ENCODE measurements at regions of chr14 and their contacts with region 1.

Region 1: DNA sequence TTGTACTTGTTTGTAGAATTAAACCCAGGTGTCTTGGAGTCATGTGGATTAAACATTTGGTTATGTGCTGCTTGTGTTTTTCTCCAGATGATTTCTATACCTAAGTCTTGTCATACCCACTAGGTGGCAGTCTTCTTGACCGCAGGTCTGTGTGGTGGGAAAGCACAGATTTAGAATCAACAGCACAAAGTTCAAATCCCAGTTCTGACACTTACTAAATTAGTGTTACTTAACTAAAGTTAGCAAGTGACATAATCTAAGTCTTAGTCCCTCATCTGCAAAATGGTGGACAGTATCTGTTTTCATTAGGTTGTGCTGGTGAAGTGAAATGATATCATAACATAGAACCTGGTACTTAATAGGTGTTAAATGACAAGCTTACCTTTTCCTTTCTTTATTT is 151.0 kb upstream of the ARHGAP5 start:
- DNase-seq: peak; percentile 60
- H3K4me3 ChIP-seq: no peak overlapping the region
- H3K27ac ChIP-seq: peak overlapping the region; percentile 95
- H3K4me1 ChIP-seq: peaks cover 21% of the 10 kb centered on the region
- H3K27me3 ChIP-seq: no peaks in the 10 kb centered on the region
- CTCF ChIP-seq: peak; percentile 46 to 53
- POLR2A ChIP-seq: no peak

Region 2: DNA sequence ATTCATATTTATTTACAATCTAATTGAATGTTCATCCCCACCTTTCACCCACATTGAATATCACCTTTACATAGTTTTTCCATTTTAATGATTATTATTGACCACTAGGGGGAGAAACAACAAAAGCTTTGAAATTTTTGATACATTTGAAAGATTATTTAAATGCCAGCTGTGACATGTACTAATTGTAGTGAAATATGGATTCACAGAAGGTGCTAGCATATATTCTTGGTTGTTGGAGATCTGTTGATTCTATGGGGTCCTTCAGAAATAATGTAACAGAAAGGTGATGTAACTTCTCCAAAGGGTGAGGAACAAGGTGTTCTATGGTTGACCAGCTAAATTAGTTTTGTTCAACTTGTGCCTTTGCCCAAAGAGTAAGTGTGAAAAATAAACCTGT is 415.9 kb before region 1 on chr14:
- CTCF ChIA-PET with region 1: interaction called, 9 read pairs
- POLR2A ChIA-PET with region 1: no interaction called
- dilution Hi-C with region 1: no loop called
- intact Hi-C with region 1: loop called (anchors 10 kb)
- DNase-seq: peak; percentile 38
- H3K4me3 ChIP-seq: no peak overlapping the region
- H3K27ac ChIP-seq: no peak overlapping the region
- H3K4me1 ChIP-seq: no peaks in the 10 kb centered on the region
- H3K27me3 ChIP-seq: peaks cover 1 to 2% of the 10 kb centered on the region in 2 experiments
- CTCF ChIP-seq: peak; percentile 13 to 22
- POLR2A ChIP-seq: no peak

Region 3: DNA sequence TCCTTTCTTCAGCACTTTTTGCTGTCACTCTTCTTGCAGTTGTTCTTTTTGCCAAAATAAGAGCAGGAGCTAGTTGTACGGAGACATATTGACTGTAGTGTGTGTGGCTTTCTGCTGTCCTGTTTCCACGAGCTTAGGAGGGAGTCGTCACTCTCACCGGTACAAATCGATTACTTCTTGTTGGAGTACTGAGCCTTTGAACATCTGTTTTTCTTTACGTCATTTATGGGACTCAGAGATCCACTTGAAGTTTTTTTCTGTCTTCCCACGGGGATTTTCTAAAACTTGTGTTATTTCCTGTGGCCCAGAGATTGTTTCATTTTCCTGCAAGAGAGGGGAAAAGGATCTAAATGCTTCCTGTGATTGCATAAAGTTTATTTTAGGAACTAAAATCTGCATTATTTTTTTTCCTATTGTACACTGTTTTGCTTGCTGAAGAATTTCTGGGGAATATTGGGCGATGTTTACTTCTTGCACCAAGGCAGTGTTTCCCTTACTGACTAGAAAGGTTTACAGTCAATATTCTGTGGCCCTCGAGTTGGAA is 48.8 kb before region 1 on chr14:
- CTCF ChIA-PET with region 1: interaction called, 6 read pairs
- POLR2A ChIA-PET with region 1: no interaction called
- dilution Hi-C with region 1: no loop called
- intact Hi-C with region 1: loop called (anchors 1 kb)
- DNase-seq: peak; percentile 81
- H3K4me3 ChIP-seq: peak overlapping the region in 1 of 3 experiments; percentile 29
- H3K27ac ChIP-seq: peak overlapping the region; percentile 16
- H3K4me1 ChIP-seq: peaks cover 11% of the 10 kb centered on the region
- H3K27me3 ChIP-seq: no peaks in the 10 kb centered on the region
- CTCF ChIP-seq: no peak
- POLR2A ChIP-seq: no peak

Region 4: GRCh38 chr14:32202998-32203882 is 277.1 kb after region 1 on chr14 and contains the start of gene RNU6-8:
- CTCF ChIA-PET with region 1: interaction called, 7 read pairs
- POLR2A ChIA-PET with region 1: no interaction called
- dilution Hi-C with region 1: no loop called
- intact Hi-C with region 1: loop called (anchors 2 kb)
- DNase-seq: peak; percentile 88
- H3K4me3 ChIP-seq: peak within 1 kb of the TSS; percentile 55 to 92 (median 78)
- H3K27ac ChIP-seq: peak within 1 kb of the TSS; percentile 88
- H3K4me1 ChIP-seq: peaks cover 16% of the 10 kb centered on the region
- H3K27me3 ChIP-seq: peaks cover 6 to 17% of the 10 kb centered on the region in 2 experiments
- CTCF ChIP-seq: no peak
- POLR2A ChIP-seq: peak; percentile 46
- total RNA-seq, gene RNU6-8: not detected in 2 replicates

Region 5: DNA sequence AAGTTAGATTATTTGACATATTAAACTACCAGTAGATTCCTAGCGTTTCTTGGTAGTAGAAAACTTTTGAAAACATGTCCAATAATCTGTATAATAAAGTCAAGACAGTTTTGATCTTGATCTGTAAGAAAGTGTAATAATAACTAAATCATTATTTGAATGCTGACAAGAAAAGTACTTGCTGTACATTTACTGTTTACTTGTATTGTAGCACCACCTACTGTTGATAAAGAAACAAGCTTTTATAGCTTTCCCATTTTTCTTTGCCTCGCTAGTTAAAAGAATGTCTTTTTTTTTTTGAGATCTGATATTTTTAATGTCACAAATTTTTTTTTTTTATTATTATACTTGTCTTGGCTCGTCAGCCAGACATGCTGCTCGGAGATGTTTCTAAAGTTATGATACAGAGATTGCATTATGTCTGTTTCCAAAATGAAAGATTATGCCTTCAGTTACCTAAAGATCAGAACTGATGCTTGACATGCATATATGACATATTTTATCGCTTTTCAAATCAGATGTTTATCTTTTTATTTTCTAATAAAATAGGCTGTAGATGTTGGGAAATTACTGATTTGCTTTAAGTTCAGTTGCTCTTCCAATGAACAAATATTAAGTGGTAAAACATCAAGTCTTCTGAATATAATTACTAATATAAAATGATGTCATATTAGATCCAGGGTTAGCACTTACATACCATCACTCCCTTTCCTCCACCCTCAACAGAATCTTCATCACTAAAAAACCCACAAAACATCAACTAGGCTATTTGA is 543.5 kb after region 1 on chr14:
- CTCF ChIA-PET with region 1: interaction called, 11 read pairs
- POLR2A ChIA-PET with region 1: no interaction called
- dilution Hi-C with region 1: no loop called
- intact Hi-C with region 1: loop called (anchors 5 kb)
- DNase-seq: peak; percentile 62
- H3K4me3 ChIP-seq: no peak overlapping the region
- H3K27ac ChIP-seq: no peak overlapping the region
- H3K4me1 ChIP-seq: peaks cover 3% of the 10 kb centered on the region
- H3K27me3 ChIP-seq: no peaks in the 10 kb centered on the region
- CTCF ChIP-seq: peak; percentile 17 to 36
- POLR2A ChIP-seq: no peak

Measured in endothelial cell of umbilical vein (primary cell).